Endothelial cell of umbilical vein (primary cell): ENCODE measurements at regions of chr3 and their contacts with region 1.

Region 1: DNA sequence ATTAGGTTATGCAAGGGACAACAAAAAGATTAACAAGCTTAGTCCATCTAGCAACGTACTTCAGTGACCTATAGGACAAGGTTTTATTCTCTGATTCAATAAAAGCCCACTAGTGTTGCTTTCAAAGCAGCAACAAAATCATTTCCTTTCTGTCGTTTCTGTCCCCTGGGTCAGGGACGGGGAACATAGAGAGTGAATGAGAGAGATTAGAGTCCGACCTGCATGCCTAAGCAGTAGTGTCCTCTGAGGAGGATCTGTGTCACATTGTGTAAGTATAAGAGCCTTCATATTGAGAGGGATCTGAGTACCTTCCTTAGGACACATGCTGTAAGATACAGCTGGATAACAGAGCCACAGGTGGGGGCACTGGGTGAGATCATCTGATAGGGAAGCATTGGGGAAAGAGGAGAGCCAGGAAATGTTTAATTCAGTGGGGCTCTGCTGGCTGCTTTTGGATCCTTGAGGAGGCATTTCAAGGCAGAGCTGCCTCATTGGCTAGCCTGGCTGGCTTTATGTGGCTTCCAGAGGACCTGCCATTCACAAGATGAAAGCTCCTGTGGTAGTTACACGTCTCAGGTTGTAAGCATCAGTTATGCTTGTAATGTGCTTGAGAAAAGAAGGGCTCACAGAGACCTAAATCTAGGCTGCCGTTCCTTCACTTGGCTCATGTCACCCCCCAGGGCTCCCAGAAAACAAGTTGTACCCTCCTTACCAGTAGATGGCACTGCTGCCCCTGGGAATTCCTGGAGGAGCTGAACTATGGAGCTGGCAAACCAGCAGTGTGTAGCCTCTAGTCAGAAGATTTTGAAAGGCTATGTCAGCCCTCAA is 2.7 kb downstream of the TMEM108 start:
- DNase-seq: peak; percentile 64
- H3K4me3 ChIP-seq: no peak overlapping the region
- H3K27ac ChIP-seq: no peak overlapping the region
- H3K4me1 ChIP-seq: peaks cover 7% of the 10 kb centered on the region
- H3K27me3 ChIP-seq: peaks cover 23 to 33% of the 10 kb centered on the region in 2 experiments
- CTCF ChIP-seq: peak; percentile 70 to 71
- POLR2A ChIP-seq: no peak

Region 2: DNA sequence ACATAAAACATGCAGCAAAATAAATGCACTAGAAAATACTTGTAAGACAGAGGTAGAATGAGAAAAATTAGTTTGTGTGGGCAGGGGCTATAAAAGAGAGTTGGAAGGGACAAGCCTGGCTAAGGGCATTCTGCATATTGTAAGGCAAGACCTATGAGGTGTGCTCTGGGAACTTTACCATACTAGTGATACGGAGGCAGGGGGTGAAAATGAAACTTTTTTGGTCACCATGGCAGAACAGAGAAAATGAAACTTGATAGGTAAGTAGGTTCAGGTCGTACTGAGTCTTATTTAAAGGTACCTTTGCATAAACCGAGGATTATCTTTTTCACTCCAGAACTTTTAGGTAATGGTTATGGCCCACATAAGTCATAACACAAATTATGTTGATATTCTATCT is 518.6 kb before region 1 on chr3:
- CTCF ChIA-PET with region 1: no interaction called
- POLR2A ChIA-PET with region 1: no interaction called
- dilution Hi-C with region 1: no loop called
- intact Hi-C with region 1: no loop called
- DNase-seq: no peak
- H3K4me3 ChIP-seq: no peak overlapping the region
- H3K27ac ChIP-seq: no peak overlapping the region
- H3K4me1 ChIP-seq: no peaks in the 10 kb centered on the region
- H3K27me3 ChIP-seq: no peaks in the 10 kb centered on the region
- CTCF ChIP-seq: no peak
- POLR2A ChIP-seq: no peak

Region 3: GRCh38 chr3:132730891-132731580 is 309.9 kb before region 1 on chr3:
- CTCF ChIA-PET with region 1: interaction called, 41 read pairs
- POLR2A ChIA-PET with region 1: no interaction called
- dilution Hi-C with region 1: no loop called
- intact Hi-C with region 1: loop called (anchors 1 kb)
- DNase-seq: peak; percentile 61
- H3K4me3 ChIP-seq: no peak overlapping the region
- H3K27ac ChIP-seq: no peak overlapping the region
- H3K4me1 ChIP-seq: peaks cover 2% of the 10 kb centered on the region
- H3K27me3 ChIP-seq: peaks cover 7 to 18% of the 10 kb centered on the region in 2 experiments
- CTCF ChIP-seq: peak; percentile 27 to 40
- POLR2A ChIP-seq: no peak

Region 4: DNA sequence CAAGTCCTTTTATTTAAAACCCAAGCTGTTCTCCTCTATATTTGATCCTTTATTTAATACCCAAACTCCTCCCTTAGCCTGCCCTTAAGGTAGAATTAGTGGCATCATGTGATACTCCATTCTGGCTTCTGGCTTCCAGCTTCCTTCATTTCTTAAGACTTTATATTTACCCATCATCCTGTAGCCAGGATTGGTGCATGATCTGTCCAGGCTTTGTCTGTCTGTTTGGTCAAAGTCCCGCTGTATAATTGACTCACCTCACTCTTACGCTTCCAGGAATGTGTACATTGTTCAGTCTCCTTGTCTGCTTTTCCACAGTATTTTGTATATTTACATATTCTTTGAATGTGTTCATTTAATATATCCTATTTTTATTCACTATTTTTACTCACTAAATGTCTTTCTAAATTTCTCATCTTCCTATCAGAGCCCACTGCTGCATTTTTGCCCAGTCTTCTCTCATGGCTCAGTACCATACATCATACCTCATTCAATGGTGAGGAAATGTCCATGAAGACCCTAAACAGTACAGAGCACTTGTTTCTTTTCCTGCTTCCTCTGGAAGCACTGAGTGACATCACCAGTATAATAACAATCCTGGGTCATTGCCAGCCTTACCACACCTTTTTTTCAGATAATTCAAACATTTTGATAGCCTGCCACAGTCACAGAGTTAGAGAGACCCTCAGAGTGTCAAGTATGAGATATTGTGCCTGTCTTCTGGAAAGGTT is 28.8 kb after region 1 on chr3:
- CTCF ChIA-PET with region 1: interaction called, 11 read pairs
- POLR2A ChIA-PET with region 1: no interaction called
- dilution Hi-C with region 1: no loop called
- intact Hi-C with region 1: no loop called
- DNase-seq: no peak
- H3K4me3 ChIP-seq: no peak overlapping the region
- H3K27ac ChIP-seq: no peak overlapping the region
- H3K4me1 ChIP-seq: no peaks in the 10 kb centered on the region
- H3K27me3 ChIP-seq: no peaks in the 10 kb centered on the region
- CTCF ChIP-seq: no peak
- POLR2A ChIP-seq: no peak

Region 5: DNA sequence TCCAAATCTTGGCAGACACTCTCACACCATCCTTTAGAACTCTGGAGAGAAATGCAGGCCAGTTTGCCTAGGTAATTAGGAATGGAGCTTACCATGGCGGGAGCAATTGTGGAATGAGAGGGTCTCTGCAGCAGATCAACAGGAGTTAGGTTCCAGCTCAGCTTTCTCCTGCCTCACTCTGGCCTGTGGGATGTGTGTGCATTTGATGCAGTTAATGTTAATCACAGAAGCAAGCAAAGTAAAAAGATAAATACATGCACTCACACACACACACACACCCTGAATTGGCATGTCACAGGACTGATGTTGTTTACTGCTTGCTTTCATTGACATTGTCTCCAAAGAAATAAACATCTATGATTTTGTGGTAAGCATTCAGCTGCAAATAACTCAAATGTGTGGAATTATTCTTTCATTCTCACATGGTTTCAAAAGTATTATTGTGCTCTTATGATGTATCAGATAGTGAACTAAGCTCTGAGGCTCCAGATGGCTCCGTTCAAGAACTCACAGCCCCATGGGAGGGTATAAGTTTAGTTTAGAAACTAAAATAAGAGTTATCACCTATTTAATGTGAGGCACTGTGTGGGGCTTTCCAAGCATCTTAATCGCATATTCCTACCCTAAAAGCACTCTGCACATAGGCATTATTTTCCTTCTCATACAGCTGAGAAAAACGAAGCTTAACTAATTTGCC is 327.6 kb after region 1 on chr3:
- CTCF ChIA-PET with region 1: interaction called, 528 read pairs
- POLR2A ChIA-PET with region 1: no interaction called
- dilution Hi-C with region 1: no loop called
- intact Hi-C with region 1: no loop called
- DNase-seq: no peak
- H3K4me3 ChIP-seq: no peak overlapping the region
- H3K27ac ChIP-seq: no peak overlapping the region
- H3K4me1 ChIP-seq: no peaks in the 10 kb centered on the region
- H3K27me3 ChIP-seq: peaks cover 0 to 9% of the 10 kb centered on the region in 2 experiments
- CTCF ChIP-seq: no peak
- POLR2A ChIP-seq: no peak

Region 6: GRCh38 chr3:133384331-133385027 is 343.6 kb after region 1 on chr3:
- CTCF ChIA-PET with region 1: interaction called, 528 read pairs
- POLR2A ChIA-PET with region 1: no interaction called
- dilution Hi-C with region 1: no loop called
- intact Hi-C with region 1: loop called (anchors 1 kb)
- DNase-seq: peak; percentile 71
- H3K4me3 ChIP-seq: no peak overlapping the region
- H3K27ac ChIP-seq: no peak overlapping the region
- H3K4me1 ChIP-seq: peaks cover 8% of the 10 kb centered on the region
- H3K27me3 ChIP-seq: peaks cover 0 to 2% of the 10 kb centered on the region in 2 experiments
- CTCF ChIP-seq: peak; percentile 93 to 96
- POLR2A ChIP-seq: no peak

Region 7: DNA sequence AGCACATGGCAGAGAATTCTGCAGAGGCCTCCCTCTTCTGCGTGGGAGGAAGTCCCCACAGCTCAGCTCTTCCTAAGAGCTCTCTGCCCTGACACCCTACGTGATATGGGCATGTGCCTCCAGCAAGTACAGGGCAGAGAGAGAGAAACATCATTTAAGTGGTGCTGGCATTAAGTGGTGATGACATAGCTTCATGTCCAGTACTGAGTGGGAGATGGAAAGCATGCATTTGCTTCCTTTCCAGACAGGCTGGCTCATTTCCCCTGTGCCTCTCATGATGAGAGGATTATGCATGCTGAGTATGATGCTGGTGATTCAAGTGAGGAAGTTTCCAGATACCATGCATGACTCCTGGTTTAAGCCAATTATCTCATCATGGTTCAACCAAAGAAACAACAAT is 385.8 kb after region 1 on chr3:
- CTCF ChIA-PET with region 1: interaction called, 101 read pairs
- POLR2A ChIA-PET with region 1: no interaction called
- dilution Hi-C with region 1: no loop called
- intact Hi-C with region 1: loop called (anchors 1 kb)
- DNase-seq: no peak
- H3K4me3 ChIP-seq: no peak overlapping the region
- H3K27ac ChIP-seq: no peak overlapping the region
- H3K4me1 ChIP-seq: no peaks in the 10 kb centered on the region
- H3K27me3 ChIP-seq: peaks cover 0 to 12% of the 10 kb centered on the region in 2 experiments
- CTCF ChIP-seq: no peak
- POLR2A ChIP-seq: no peak

Region 8: DNA sequence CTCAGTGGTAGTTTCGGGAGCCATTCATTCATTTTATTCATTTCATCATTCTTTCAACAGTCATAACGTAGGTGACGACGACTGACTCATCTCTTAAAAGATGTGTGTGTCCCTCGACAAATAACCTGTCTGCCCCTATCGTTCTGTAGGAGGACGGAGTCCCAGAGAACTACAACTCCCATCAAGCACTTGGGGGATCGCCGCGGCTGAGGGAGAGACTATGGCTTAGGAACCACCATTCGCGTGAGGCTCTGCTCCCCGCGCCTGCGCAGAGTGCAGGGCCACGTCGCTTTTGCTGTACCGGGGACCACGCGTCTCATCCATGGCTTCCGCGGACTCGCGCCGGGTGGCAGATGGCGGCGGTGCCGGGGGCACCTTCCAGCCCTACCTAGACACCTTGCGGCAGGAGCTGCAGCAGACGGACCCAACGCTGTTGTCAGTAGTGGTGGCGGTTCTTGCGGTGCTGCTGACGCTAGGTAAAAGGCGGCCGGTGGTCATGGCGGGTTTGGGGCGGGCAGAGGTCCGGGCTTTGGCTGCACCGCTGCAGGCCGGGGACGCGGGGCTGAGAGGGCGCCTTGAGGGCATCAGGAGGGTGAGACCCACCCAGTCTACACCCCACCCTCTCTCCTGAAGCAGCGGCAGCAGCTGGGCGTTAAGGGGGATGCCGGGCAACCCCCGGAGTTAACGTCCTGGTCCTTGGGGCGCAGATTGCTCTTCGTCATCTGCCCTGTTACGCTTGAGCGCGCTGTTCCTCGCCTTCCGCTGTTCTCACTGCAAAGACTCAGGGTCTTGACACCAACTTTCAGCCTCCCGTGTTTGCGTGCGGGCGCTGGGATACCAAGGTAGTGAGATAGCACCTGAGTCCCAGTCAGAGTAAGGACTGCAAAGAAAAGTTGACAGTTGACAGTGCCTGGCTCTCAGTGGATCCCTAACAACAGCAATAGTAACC is 764.9 kb after region 1 on chr3 and contains the start of gene SRPRB:
- CTCF ChIA-PET with region 1: no interaction called
- POLR2A ChIA-PET with region 1: no interaction called
- dilution Hi-C with region 1: no loop called
- intact Hi-C with region 1: loop called (anchors 2 kb)
- DNase-seq: peak; percentile 95
- H3K4me3 ChIP-seq: peak within 1 kb of the TSS; percentile 71 to 95 (median 82)
- H3K27ac ChIP-seq: peak within 1 kb of the TSS; percentile 35
- H3K4me1 ChIP-seq: peaks cover 6% of the 10 kb centered on the region
- H3K27me3 ChIP-seq: peaks cover 3 to 7% of the 10 kb centered on the region in 2 experiments
- CTCF ChIP-seq: no peak
- POLR2A ChIP-seq: no peak
- total RNA-seq, gene SRPRB: 59.5 and 69.2 TPM in 2 replicates